A549 (cell line): ENCODE measurements at regions of chr20 and their contacts with region 1.

Region 1: DNA sequence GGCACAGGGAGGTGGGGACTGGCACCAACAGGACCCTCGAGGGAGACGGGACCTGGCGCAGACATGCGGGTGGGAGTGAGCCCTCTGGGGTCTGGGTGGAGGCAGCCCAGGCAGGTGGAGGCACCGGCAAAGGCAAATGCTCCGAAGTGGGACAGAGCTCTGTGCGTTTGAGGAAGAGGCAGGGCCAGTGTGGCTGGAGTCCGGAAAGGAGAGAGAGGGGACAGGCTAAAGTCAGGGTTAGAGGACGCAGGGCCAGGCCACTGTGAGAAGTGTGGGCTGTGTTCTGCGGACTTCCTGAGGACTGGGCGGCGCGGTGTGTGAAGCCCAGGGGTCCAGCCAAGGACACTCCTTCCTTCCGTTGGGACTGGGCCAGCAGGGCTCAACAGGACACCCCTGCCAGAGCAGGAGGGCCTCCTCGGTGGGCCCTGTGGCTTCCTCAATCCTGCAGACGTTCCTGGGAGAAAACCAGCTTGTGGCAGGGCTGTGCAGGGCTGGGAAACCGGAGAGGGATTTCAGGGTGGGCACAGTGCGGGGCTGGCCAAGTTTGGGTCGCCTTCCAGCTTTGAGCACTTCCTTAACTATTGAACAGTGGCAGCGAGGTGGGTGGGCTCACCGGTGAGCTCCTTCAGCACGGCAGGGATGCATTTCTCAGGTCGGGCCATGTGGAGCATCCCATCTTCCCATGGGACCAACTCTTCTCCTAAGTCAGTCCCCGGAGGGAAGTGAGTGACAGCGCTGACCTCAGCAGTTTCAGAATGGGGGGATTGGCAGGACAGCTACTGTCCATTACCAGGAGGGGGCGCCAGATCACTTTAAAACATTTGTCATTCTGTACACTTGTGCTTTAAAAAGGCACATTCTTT is 22.5 kb downstream of the MOCS3 start:
- DNase-seq: peak; percentile 60 to 78
- ATAC-seq: peak; percentile 47 to 73; a peak in 5 of 6 replicates
- H3K4me3 ChIP-seq: no peak overlapping the region
- H3K27ac ChIP-seq: peak overlapping the region; percentile 64 to 83
- H3K4me1 ChIP-seq: peaks cover 41% of the 10 kb centered on the region
- CTCF ChIP-seq: peak; percentile 85
- EP300 ChIP-seq: no peak
- POLR2A ChIP-seq: no peak
- RAD21 ChIP-seq: peak; percentile 72 to 77

Region 2: GRCh38 chr20:50967586-50967985 is 13.5 kb before region 1 on chr20:
- CTCF ChIA-PET with region 1: interaction called, 23 read pairs
- POLR2A ChIA-PET with region 1: no interaction called
- DNase-seq: no peak
- ATAC-seq: no peak
- H3K4me3 ChIP-seq: no peak overlapping the region
- H3K27ac ChIP-seq: no peak overlapping the region
- H3K4me1 ChIP-seq: no peaks in the 10 kb centered on the region
- CTCF ChIP-seq: no peak
- EP300 ChIP-seq: no peak
- POLR2A ChIP-seq: no peak
- RAD21 ChIP-seq: no peak

Region 3: GRCh38 chr20:50992733-50993457 is 11.8 kb after region 1 on chr20:
- CTCF ChIA-PET with region 1: interaction called, 46 read pairs
- POLR2A ChIA-PET with region 1: no interaction called
- DNase-seq: peak; percentile 89 to 90
- ATAC-seq: peak; percentile 71 to 98
- H3K4me3 ChIP-seq: no peak overlapping the region
- H3K27ac ChIP-seq: peak overlapping the region in 1 of 2 experiments; percentile 8; a peak in 2 of 6 replicates
- H3K4me1 ChIP-seq: peaks cover 13% of the 10 kb centered on the region
- CTCF ChIP-seq: peak; percentile 67
- EP300 ChIP-seq: no peak
- POLR2A ChIP-seq: no peak; the same call in 1 of the 2 replicates
- RAD21 ChIP-seq: peak; percentile 62 to 76

Region 4: DNA sequence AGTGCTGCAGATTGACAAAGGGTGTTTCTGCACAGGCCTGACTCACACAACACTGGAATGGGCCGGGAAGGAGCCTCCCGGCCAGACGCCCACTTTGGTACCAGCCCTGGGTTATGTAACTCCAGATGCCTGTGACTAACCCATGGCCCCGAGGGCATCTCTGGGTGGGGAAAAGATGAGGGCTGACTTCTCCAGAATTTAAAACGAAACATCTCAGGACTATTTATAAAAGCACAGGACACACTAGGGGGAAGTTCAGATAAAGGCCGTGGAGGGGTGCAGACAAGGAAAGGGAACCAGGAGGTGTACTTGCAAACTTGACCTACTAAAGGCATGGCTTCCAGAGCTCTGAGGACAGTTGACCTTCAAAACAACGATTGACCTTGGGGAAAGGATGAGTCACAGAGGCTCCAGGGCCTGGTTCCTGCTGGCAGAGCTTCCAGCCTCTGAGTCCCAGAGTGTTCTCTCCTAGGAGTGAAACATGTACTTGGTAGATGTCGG is 364.6 kb after region 1 on chr20:
- CTCF ChIA-PET with region 1: interaction called, 12 read pairs
- POLR2A ChIA-PET with region 1: no interaction called
- DNase-seq: peak; percentile 24 to 60
- ATAC-seq: peak; percentile 70 to 82
- H3K4me3 ChIP-seq: no peak overlapping the region
- H3K27ac ChIP-seq: peak overlapping the region; percentile 76 to 81
- H3K4me1 ChIP-seq: peaks cover 27% of the 10 kb centered on the region
- CTCF ChIP-seq: no peak
- EP300 ChIP-seq: peak; percentile 27 to 52; a peak in 2 of 5 replicates
- POLR2A ChIP-seq: no peak
- RAD21 ChIP-seq: no peak

Region 5: GRCh38 chr20:51366155-51366886 is 385.2 kb after region 1 on chr20:
- CTCF ChIA-PET with region 1: interaction called, 21 read pairs
- POLR2A ChIA-PET with region 1: no interaction called
- DNase-seq: peak; percentile 86 to 90
- ATAC-seq: peak; percentile 87 to 90
- H3K4me3 ChIP-seq: peak overlapping the region; percentile 15; the same call in 1 of the 3 replicates
- H3K27ac ChIP-seq: peak overlapping the region; percentile 92 to 96
- H3K4me1 ChIP-seq: peaks cover 35% of the 10 kb centered on the region
- CTCF ChIP-seq: no peak
- EP300 ChIP-seq: peak; percentile 60 to 77; a peak in 3 of 5 replicates
- POLR2A ChIP-seq: no peak
- RAD21 ChIP-seq: peak in 1 of 2 experiments; percentile 27; a peak in 2 of 5 replicates

Region 6: DNA sequence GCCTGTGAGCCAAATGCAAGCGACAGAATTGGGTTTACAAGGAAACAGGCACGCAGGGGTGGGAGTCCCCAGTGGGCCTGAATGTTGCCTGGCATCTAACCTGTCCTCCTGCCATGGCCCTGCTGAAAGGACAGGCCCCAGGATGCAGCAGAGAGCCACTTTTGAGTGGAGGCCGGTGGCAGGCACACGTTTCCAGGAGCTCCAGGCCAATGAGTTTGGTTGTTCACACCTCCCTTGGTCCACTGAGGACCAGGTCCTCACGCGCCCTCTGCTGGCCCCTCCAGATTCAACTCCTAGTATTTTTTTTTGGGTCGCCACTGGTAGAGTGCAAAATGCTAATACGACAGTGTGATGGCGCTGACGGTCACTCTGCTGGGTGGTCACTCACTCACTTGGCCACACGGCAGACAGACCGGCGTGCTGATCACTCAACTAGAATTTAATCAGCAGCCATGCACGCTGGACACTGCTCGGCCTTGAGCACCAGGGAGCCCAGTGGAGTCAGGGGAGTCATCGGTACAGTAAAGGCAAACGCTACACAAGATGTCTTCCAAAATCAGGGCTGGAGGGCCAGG is 643.2 kb after region 1 on chr20:
- CTCF ChIA-PET with region 1: interaction called, 16 read pairs
- POLR2A ChIA-PET with region 1: no interaction called
- DNase-seq: peak; percentile 75
- ATAC-seq: peak; percentile 76 to 92; a peak in 5 of 6 replicates
- H3K4me3 ChIP-seq: no peak overlapping the region
- H3K27ac ChIP-seq: peak overlapping the region in 1 of 2 experiments; percentile 58; a peak in 4 of 6 replicates
- H3K4me1 ChIP-seq: no peaks in the 10 kb centered on the region
- CTCF ChIP-seq: peak; percentile 78
- EP300 ChIP-seq: no peak
- POLR2A ChIP-seq: no peak
- RAD21 ChIP-seq: peak; percentile 68 to 79